Kidney (tissue), 22 donors: ENCODE measurements at regions of chr3 and their contacts with region 1.

Region 1: DNA sequence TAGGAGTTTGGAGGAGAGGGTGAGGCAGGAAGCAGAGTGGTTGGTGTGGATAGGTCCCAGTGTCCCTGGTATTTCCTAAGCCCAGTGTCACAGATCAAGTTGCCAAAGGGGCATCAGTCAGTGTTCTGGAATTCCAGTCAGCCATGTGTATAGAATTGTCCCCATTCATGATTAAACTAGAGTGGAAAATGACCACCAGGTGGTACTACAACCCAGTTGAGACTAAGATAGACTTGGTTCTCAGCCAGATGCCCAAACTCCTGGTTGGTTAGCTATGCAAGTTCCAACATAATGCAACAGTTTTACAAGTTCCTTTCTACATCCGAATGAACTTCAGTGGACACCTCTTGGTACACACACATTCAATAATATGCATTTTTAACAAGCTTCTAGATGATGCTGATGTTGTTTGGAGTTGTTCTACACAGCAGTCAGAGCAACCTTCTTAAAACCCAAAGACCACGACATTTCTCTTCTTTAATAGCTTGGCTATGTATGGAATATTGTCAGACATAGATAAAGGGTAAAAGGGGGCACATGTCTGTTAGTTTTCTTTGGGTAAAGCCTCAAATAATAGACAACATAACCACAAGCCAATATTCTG is 8.4 kb upstream of the ATR start:
- DNase-seq: peak in 3 of 5 donors; percentile 50 to 90 (median 89)
- H3K4me3 ChIP-seq: no peak overlapping the region
- H3K27ac ChIP-seq: no peak overlapping the region
- H3K4me1 ChIP-seq: no peaks in the 10 kb centered on the region
- H3K27me3 ChIP-seq: no peaks in the 10 kb centered on the region
- CTCF ChIP-seq: peak; percentile 73

Region 2: DNA sequence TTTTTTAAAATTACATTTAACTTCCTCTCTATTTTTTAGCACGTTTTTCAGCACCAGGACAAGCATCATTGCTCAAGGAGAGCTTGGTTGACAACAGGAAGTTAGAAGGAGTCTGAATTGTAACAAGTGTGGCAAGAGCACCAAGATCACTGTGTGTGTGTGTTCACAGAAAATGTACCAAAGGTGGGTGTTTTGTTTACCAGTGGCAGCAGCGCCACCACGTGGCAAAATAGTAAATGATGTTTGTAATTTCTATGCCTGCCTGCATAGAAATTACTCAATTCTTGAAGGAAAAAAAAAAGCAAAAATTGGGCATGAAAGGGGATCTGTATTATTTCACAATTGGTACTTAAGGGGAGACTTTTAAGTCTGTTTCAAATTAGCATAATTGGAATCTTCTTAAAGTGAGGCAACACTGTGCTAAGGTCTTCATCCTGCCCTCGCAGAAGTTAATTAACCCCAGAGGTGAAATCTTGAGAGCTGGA is 407.1 kb after region 1 on chr3:
- intact Hi-C with region 1: loop called (anchors 10 kb)
- DNase-seq: peak in 4 of 5 donors; percentile 66 to 89 (median 72)
- H3K4me3 ChIP-seq: no peak overlapping the region
- H3K27ac ChIP-seq: no peak overlapping the region
- H3K4me1 ChIP-seq: peaks cover 0 to 4% (median 3%) of the 10 kb centered on the region in 3 donors
- H3K27me3 ChIP-seq: no peaks in the 10 kb centered on the region
- CTCF ChIP-seq: peak; percentile 65